Naive thymus-derived CD8-positive, alpha-beta T cell (primary cell): ENCODE measurements at regions of chr15 and their contacts with region 1.

Region 1: DNA sequence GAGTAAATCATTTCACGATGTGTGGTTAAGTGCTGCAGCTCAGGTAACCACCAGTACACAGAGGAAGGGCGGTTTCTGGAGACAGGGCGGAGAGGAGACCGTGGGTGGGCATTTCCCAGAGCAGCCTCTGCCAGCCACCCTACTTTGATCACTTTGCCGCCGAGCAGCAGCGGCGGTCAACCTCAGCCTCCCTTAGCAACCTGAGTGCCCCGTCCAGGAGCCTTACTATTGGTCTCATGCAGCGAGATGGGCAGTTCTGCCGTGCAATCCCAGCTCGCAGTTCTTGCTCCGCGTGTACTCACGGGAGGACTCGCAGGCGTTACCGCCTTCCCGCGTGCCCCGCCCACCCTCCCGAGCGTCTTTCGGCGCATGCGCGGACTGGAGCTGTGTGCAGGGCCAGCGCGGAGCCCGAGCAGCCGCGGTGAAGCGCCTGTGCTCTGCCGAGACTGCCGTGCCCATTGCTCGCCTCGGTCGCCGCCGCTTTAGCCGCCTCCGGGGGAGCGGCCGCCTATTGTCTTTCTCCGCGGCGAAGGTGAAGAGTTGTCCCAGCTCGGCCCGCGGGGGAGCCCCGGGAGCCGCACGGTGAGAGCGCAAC is at the start of gene AKAP13:
- DNase-seq: peak; percentile 88 to 98 (median 94)
- ATAC-seq: peak; percentile 75 to 82
- H3K4me3 Mint-ChIP-seq: peak within 1 kb of the TSS; percentile 82 to 95 (median 94)
- H3K27ac Mint-ChIP-seq: peak within 1 kb of the TSS; percentile 89 to 99 (median 96)
- H3K4me1 Mint-ChIP-seq: peaks cover 39 to 60% (median 58%) of the 10 kb centered on the region in 4 donors
- H3K27me3 Mint-ChIP-seq: no peaks in the 10 kb centered on the region
- polyA plus RNA-seq, gene AKAP13: 113 to 131 (median 120) TPM

Region 2: GRCh38 chr15:85330901-85331588 is 49.3 kb before region 1 on chr15:
- POLR2A ChIA-PET with region 1: interaction called, 28 read pairs
- DNase-seq: peak; percentile 18 to 83 (median 54)
- ATAC-seq: peak; percentile 70 to 75
- H3K4me3 Mint-ChIP-seq: peak overlapping the region; percentile 85 to 97 (median 92)
- H3K27ac Mint-ChIP-seq: peak overlapping the region; percentile 82 to 98 (median 94)
- H3K4me1 Mint-ChIP-seq: peaks cover 24 to 65% (median 53%) of the 10 kb centered on the region in 4 donors
- H3K27me3 Mint-ChIP-seq: no peaks in the 10 kb centered on the region

Region 3: DNA sequence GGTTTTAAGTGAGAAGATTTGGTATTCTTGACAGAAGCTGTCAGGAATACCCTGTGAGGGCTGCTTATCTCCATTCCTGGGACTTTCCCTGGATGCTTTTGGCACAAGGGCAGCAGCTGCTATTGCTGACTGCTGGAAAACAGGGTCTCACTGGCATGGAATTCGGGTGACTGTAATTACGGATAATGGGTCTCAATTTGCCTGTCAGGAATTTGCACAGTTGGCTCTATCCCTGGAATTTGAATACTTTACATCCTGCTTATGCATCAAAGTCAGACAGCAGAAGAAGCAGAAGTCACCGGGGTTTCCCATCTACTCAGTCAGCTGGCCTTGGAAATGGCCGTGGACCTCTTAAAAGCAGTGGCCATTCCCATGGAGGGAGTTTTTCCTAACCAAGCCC is 25.9 kb before region 1 on chr15:
- POLR2A ChIA-PET with region 1: no interaction called
- DNase-seq: no peak
- ATAC-seq: no peak
- H3K4me3 Mint-ChIP-seq: no peak overlapping the region
- H3K27ac Mint-ChIP-seq: peak overlapping the region in 1 of 10 donors; percentile 4
- H3K4me1 Mint-ChIP-seq: peaks cover 3 to 15% (median 8%) of the 10 kb centered on the region in 4 donors
- H3K27me3 Mint-ChIP-seq: no peaks in the 10 kb centered on the region

Region 4: GRCh38 chr15:85403745-85404144 is 23.4 kb after region 1 on chr15:
- POLR2A ChIA-PET with region 1: interaction called, 11 read pairs
- DNase-seq: no peak
- ATAC-seq: no peak
- H3K4me3 Mint-ChIP-seq: peak overlapping the region in 7 of 10 donors; percentile 11 to 63 (median 41)
- H3K27ac Mint-ChIP-seq: peak overlapping the region; percentile 5 to 96 (median 80)
- H3K4me1 Mint-ChIP-seq: peaks cover 39 to 90% (median 81%) of the 10 kb centered on the region in 4 donors
- H3K27me3 Mint-ChIP-seq: no peaks in the 10 kb centered on the region

Region 5: GRCh38 chr15:85412956-85413854 is 32.9 kb after region 1 on chr15:
- POLR2A ChIA-PET with region 1: interaction called, 11 read pairs
- DNase-seq: peak; percentile 36 to 78 (median 52)
- ATAC-seq: peak; percentile 97
- H3K4me3 Mint-ChIP-seq: peak overlapping the region in 9 of 10 donors; percentile 36 to 74 (median 63)
- H3K27ac Mint-ChIP-seq: peak overlapping the region; percentile 22 to 95 (median 84)
- H3K4me1 Mint-ChIP-seq: peaks cover 30 to 80% (median 71%) of the 10 kb centered on the region in 4 donors
- H3K27me3 Mint-ChIP-seq: no peaks in the 10 kb centered on the region

Region 6: DNA sequence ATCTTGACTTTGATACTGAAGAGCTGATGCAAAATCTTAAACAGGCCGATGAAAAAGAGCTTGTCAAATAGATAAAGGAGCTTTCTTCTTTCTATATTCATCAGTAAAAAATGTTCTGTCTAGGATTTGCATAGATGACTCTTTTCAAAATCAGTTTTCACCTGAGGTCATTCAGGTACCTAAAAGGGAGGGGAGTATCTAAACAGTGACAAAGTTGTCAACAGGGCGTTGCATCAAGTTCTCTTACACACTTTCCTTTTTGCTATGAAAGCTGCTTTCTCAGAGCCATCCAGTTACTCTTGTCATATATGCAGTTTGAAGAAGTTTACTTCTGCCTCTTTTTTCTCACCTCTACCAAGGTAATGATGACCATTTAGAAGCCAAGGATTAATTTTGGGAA is 60.1 kb after region 1 on chr15:
- POLR2A ChIA-PET with region 1: no interaction called
- DNase-seq: no peak
- ATAC-seq: peak in 1 of 2 donors; percentile 34
- H3K4me3 Mint-ChIP-seq: peak overlapping the region in 4 of 10 donors; percentile 0 to 35 (median 5)
- H3K27ac Mint-ChIP-seq: peak overlapping the region in 8 of 10 donors; percentile 7 to 57 (median 44)
- H3K4me1 Mint-ChIP-seq: peaks cover 20 to 54% (median 49%) of the 10 kb centered on the region in 4 donors
- H3K27me3 Mint-ChIP-seq: no peaks in the 10 kb centered on the region